Thyroid gland (tissue), 4 donors: ENCODE measurements at regions of chr4 and their contacts with region 1.

Region 1: GRCh38 chr4:77385124-77385969 is 220.3 kb upstream of the CXCL13 start:
- DNase-seq: peak; percentile 72 to 75
- H3K4me3 ChIP-seq: no peak overlapping the region
- H3K27ac ChIP-seq: no peak overlapping the region
- H3K4me1 ChIP-seq: no peaks in the 10 kb centered on the region
- H3K27me3 ChIP-seq: no peaks in the 10 kb centered on the region
- CTCF ChIP-seq: peak; percentile 42 to 94 (median 80)
- POLR2A ChIP-seq: no peak

Region 2: GRCh38 chr4:77209936-77210335 is 175.4 kb before region 1 on chr4:
- intact Hi-C with region 1: no loop called
- DNase-seq: peak; percentile 74 to 78
- H3K4me3 ChIP-seq: no peak overlapping the region
- H3K27ac ChIP-seq: no peak overlapping the region
- H3K4me1 ChIP-seq: peaks cover 0 to 8% of the 10 kb centered on the region in 2 donors
- H3K27me3 ChIP-seq: no peaks in the 10 kb centered on the region
- CTCF ChIP-seq: no peak
- POLR2A ChIP-seq: no peak

Region 3: GRCh38 chr4:77434299-77435092 is 49.1 kb after region 1 on chr4:
- intact Hi-C with region 1: loop called (anchors 5 kb)
- DNase-seq: no peak
- H3K4me3 ChIP-seq: no peak overlapping the region
- H3K27ac ChIP-seq: no peak overlapping the region
- H3K4me1 ChIP-seq: peaks cover 0 to 4% of the 10 kb centered on the region in 2 donors
- H3K27me3 ChIP-seq: no peaks in the 10 kb centered on the region
- CTCF ChIP-seq: no peak
- POLR2A ChIP-seq: no peak

Region 4: DNA sequence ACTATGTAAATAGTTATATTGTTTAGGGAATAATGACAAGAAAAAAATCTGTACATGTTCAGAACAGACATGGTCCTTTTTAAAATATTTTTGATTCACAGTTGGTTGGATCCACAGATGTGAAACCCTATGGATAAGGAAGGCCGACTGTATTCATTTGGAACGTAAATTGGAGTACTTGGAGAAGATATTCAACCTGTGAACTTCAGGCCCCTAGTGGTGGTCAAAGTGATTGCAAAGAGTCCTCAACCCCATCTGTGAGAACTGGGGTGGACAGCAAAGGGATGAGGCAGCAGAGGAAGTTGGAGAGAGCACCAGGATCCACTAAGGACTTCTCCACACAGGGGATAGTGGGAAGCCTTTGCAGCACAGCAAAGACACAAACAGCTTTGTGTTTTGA is 214.0 kb after region 1 on chr4:
- intact Hi-C with region 1: loop called (anchors 5 kb)
- DNase-seq: peak; percentile 9 to 10
- H3K4me3 ChIP-seq: no peak overlapping the region
- H3K27ac ChIP-seq: no peak overlapping the region
- H3K4me1 ChIP-seq: peaks cover 0 to 4% of the 10 kb centered on the region in 2 donors
- H3K27me3 ChIP-seq: no peaks in the 10 kb centered on the region
- CTCF ChIP-seq: peak in 4 of 6 experiments; percentile 34 to 51 (median 38)
- POLR2A ChIP-seq: no peak